Endothelial cell of umbilical vein (primary cell): ENCODE measurements at regions of chr2 and their contacts with region 1.

Region 1: DNA sequence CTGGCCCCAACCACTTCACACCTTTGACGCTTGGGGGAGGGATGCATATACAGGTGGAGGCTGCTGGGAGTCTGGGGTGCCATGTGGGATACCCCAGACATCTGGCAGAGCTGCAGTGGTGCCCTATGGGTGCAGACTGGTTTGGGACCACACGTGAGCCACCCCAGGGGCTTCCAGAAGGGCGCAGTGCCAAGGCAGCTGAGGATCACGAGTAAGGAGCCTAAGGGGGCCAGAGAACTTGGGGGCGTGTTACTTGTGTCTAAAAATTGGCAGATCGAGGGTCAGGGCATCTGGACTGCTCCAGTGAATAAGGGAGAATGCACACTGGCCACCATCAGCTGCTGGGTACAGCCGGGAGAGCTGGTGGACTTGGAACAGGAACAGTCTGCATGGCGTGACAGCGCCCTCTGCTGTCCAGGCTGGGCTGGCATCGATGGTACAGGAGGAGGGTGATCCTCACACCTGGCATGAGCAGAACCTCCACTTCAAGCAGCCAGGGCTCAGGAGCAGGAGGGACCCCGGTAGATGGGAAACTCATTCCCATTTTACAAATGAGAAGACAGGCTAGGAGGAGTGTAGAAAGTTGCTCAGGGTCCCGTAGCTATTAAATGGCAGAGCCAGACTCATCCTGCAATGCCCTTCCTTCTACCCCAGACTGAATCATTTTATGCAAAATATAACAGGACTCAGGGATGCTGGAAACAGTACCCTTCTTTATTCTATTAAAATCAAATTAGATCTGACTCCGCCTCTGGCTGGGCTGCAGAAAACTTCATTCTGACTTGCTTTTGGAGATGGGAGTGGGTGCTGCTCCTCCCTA is 60.4 kb downstream of the ATOH8 start:
- DNase-seq: peak; percentile 82
- H3K4me3 ChIP-seq: no peak overlapping the region
- H3K27ac ChIP-seq: no peak overlapping the region
- H3K4me1 ChIP-seq: no peaks in the 10 kb centered on the region
- H3K27me3 ChIP-seq: no peaks in the 10 kb centered on the region
- CTCF ChIP-seq: peak; percentile 97 to 98
- POLR2A ChIP-seq: no peak

Region 2: DNA sequence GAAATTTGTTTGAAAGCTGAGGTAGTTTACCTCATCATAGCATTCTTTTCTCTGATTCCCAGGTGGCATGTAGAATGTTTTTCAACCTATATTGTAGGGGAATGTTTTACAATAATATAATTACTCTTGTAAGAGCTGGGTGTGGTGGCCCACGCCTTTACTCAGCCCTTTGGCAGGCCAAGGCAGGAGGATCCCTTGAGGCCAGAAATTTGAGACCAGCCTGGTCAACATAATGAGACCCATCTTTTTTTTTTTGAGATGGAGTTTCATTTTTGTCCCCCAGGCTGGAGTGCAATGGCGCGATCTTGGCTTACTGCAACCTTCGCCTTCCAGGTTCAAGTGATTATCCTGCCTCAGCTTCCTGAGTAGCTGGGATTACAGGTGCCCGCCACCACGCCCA is 194.6 kb before region 1 on chr2:
- CTCF ChIA-PET with region 1: no interaction called
- POLR2A ChIA-PET with region 1: no interaction called
- dilution Hi-C with region 1: no loop called
- intact Hi-C with region 1: no loop called
- DNase-seq: no peak
- H3K4me3 ChIP-seq: no peak overlapping the region
- H3K27ac ChIP-seq: no peak overlapping the region
- H3K4me1 ChIP-seq: peaks cover 9% of the 10 kb centered on the region
- H3K27me3 ChIP-seq: no peaks in the 10 kb centered on the region
- CTCF ChIP-seq: no peak
- POLR2A ChIP-seq: no peak

Region 3: DNA sequence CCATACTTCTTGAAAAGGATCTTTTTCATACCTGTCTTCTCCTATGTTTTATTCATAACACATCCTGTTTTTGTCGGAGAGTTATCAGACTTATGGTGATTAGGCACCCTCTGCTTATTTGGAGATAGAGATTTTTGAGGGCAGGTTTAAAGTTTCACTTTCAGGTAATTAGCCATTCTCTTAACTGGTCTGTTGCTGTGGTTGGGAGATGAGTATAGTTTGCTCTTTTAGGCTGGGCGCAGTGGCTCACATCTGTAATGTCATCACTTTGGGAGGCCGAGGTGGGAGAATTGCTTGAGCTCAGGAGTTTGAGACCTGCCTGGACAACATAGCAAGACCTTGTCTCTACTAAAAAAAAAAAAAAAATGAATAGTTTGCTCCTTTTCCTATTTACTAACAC is 171.5 kb before region 1 on chr2:
- CTCF ChIA-PET with region 1: interaction called, 89 read pairs
- POLR2A ChIA-PET with region 1: no interaction called
- dilution Hi-C with region 1: no loop called
- intact Hi-C with region 1: no loop called
- DNase-seq: no peak
- H3K4me3 ChIP-seq: no peak overlapping the region
- H3K27ac ChIP-seq: no peak overlapping the region
- H3K4me1 ChIP-seq: no peaks in the 10 kb centered on the region
- H3K27me3 ChIP-seq: no peaks in the 10 kb centered on the region
- CTCF ChIP-seq: no peak
- POLR2A ChIP-seq: no peak

Region 4: GRCh38 chr2:85678794-85679672 is 135.2 kb before region 1 on chr2:
- CTCF ChIA-PET with region 1: interaction called, 5 read pairs
- POLR2A ChIA-PET with region 1: no interaction called
- dilution Hi-C with region 1: no loop called
- intact Hi-C with region 1: loop called (anchors 1 kb)
- DNase-seq: peak; percentile 86
- H3K4me3 ChIP-seq: no peak overlapping the region
- H3K27ac ChIP-seq: no peak overlapping the region
- H3K4me1 ChIP-seq: peaks cover 25% of the 10 kb centered on the region
- H3K27me3 ChIP-seq: no peaks in the 10 kb centered on the region
- CTCF ChIP-seq: peak; percentile 98
- POLR2A ChIP-seq: no peak

Region 5: DNA sequence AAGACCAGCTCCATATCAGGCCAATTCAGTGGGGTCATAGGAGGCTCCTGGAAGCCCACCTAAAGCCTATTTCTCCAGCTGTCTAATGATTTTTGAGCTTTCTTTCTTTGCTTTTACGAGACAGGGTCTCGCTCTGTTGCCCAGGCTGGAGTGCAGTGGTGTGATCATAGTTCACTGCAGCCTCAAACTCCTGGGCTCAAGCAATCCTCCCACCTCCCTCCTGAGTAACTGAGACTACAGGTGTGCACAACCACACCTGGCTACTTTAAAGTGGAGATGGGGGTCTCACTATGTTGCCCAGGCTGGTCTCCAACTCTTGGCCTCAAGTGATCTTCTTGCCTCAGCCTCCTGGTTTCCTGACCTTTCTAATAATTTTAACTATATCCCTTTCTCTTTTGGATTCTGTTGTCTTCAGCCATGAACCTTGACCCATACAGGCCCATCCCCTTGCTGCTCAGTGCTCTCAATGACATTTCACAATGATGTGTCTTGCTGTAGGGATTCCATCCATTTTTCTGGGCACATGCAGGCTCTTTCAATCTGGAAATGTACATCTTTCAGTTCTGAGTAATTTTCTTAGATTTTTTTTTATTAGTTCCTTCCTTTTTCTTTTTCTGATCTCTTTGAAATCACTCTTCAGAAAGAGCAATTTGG is 90.4 kb before region 1 on chr2:
- CTCF ChIA-PET with region 1: interaction called, 193 read pairs
- POLR2A ChIA-PET with region 1: no interaction called
- dilution Hi-C with region 1: loop called (anchors 25 kb)
- intact Hi-C with region 1: loop called (anchors 1 kb)
- DNase-seq: no peak
- H3K4me3 ChIP-seq: no peak overlapping the region
- H3K27ac ChIP-seq: no peak overlapping the region
- H3K4me1 ChIP-seq: no peaks in the 10 kb centered on the region
- H3K27me3 ChIP-seq: peaks cover 0 to 8% of the 10 kb centered on the region in 2 experiments
- CTCF ChIP-seq: no peak
- POLR2A ChIP-seq: no peak

Region 6: DNA sequence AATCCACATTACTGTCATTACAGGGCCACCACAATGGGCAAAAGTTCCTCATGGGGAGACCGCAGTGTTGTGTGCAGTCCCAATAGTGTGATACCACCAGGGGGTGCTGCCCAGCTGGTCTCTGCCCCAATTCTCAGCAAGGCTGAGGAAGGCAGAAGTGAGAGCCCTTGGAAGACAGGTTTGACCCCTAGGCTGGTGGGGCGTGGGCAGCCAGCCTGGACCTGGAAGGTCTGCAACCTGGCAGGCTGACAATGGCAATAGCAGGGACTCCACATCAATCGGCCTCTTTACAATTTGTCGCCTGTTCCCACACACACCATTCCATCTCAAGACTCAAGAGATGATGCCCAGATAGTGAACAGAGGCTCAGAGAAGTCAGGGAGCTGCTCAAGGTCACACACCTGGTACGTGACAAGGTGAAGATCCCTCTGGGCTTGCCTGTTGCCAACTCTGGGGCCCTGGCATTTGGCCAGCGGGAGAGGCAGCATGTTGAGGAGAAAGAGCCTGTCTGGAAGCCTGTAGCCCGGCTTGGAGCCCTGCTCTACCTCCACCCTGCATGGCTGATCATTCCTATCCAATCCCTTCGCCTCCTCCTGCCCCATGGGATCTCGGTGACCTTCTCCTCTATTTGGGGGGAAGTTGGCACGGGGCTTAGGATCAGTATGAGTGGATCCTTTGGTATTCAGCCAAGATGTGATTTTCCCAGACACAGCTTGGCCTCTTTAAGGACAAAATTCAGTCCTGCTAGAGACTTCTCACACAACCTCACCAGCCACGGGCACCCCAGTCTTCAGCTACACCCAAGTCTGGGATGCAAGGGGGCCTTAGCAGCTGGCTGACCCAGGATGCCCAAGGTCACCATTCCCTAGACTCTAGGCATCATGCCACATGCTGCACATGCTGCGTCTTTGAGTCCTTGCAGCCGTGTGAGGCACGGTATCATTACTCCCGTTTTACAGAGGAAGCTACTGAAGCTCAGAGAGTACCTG is 63.3 kb before region 1 on chr2:
- CTCF ChIA-PET with region 1: interaction called, 109 read pairs
- POLR2A ChIA-PET with region 1: no interaction called
- dilution Hi-C with region 1: no loop called
- intact Hi-C with region 1: loop called (anchors 1 kb)
- DNase-seq: peak; percentile 72
- H3K4me3 ChIP-seq: no peak overlapping the region
- H3K27ac ChIP-seq: no peak overlapping the region
- H3K4me1 ChIP-seq: peaks cover 6% of the 10 kb centered on the region
- H3K27me3 ChIP-seq: no peaks in the 10 kb centered on the region
- CTCF ChIP-seq: peak; percentile 83 to 85
- POLR2A ChIP-seq: no peak

Region 7: GRCh38 chr2:85797921-85798320 is 16.3 kb before region 1 on chr2:
- CTCF ChIA-PET with region 1: interaction called, 16 read pairs
- POLR2A ChIA-PET with region 1: no interaction called
- dilution Hi-C with region 1: no loop called
- intact Hi-C with region 1: loop called (anchors 1 kb)
- DNase-seq: peak; percentile 60
- H3K4me3 ChIP-seq: no peak overlapping the region
- H3K27ac ChIP-seq: no peak overlapping the region
- H3K4me1 ChIP-seq: peaks cover 15% of the 10 kb centered on the region
- H3K27me3 ChIP-seq: no peaks in the 10 kb centered on the region
- CTCF ChIP-seq: peak; percentile 62 to 70
- POLR2A ChIP-seq: no peak